BJ (cell line): ENCODE measurements at regions of chr6 and their contacts with region 1.

Region 1: DNA sequence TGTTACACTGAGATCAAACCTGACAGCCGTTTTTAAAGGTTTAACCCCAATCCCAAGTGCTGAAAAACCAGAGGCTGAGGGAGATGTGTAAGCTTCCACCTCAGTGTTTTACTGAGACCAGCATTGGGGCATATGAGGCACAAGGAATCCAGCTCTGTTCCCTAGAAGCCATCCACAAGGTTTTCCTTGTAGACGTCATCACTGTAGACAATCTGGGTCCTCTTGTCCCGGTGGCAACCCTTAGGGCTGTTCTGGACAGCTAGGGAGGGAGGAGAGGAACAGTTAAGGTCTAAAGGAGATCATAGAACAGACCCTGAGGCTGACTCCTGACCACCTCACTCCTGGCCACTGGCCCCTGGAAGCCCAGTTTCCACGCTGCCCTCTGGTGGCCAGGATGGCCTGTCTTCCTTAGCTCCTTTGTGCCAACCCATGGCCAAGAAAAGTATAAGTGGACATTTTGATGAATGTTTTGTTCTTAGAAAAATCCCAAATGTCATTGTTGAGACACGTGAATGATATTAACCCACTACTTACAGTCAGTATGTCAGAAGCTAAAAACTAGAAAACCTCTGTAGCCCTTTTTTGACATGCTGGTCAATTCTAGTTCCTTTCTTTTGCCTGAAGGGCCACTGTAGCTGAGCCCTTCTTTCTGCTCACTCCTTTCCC is 6.4 kb downstream of the CFB start:
- DNase-seq: no peak
- H3K4me3 ChIP-seq: no peak overlapping the region
- H3K27me3 ChIP-seq: no peaks in the 10 kb centered on the region
- CTCF ChIP-seq: peak; percentile 92

Region 2: GRCh38 chr6:31680840-31681671 is 271.2 kb before region 1 on chr6 and contains the start of gene LY6G5C:
- CTCF ChIA-PET with region 1: interaction called, 15 read pairs
- POLR2A ChIA-PET with region 1: no interaction called
- DNase-seq: peak; percentile 67
- H3K4me3 ChIP-seq: peak within 1 kb of the TSS; percentile 39
- H3K27me3 ChIP-seq: no peaks in the 10 kb centered on the region
- CTCF ChIP-seq: peak; percentile 75
- polyA plus RNA-seq, gene LY6G5C: 3.1 and 3.6 TPM in 2 replicates

Region 3: DNA sequence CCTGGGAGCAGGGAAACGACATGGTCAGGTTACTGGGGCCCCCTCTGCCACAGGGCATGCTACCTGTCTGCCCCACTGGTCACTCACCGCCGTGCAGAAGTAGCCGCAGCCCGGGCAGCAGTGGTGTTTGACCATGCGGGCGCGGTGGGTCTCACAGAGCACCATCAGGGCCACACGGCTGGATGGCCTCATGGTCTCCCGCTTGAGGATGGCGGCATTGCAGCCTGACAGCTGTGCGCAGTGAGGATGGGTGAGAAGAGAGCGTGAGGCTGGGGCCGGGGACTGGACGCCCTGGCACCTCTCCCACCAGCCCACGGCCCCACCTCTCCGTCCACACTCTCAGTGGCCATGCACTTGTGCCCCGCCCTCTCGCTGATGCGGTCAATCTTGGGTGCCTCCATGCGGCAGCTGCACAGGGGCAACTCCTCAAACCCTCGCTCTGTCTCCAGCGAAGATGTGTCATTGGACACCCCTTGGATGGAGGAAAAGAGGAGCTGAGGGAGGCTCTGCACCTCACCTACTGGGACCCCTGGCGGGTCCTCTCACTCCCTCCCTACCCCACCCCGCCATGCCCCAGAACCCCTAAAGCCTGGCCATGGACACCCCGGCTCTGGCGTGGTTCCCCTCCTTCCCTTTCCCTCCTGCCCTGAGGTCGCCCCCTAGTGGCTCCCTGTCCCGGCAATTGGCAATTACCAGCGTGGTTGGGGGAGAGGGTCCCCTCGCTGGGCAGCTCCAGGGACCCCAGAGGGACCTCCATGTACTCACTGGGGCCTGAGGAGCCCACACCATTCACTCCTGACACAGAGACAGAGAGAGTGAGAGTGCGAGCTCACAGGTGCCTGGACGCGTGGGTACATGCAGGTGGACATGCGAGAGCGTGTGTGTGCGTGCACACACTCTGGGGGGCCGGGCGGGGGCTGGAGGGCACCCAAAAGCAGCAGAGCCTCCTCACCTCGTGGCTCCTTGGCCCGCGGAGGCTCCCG is 63.7 kb before region 1 on chr6:
- CTCF ChIA-PET with region 1: interaction called, 10 read pairs
- POLR2A ChIA-PET with region 1: no interaction called
- DNase-seq: no peak
- H3K4me3 ChIP-seq: no peak overlapping the region
- H3K27me3 ChIP-seq: no peaks in the 10 kb centered on the region
- CTCF ChIP-seq: peak; percentile 82

Region 4: GRCh38 chr6:31901953-31902643 is 50.2 kb before region 1 on chr6 and contains the start of gene ZBTB12:
- CTCF ChIA-PET with region 1: interaction called, 26 read pairs
- POLR2A ChIA-PET with region 1: interaction called, 4 read pairs
- DNase-seq: peak; percentile 74
- H3K4me3 ChIP-seq: peak within 1 kb of the TSS; percentile 61
- H3K27me3 ChIP-seq: no peaks in the 10 kb centered on the region
- CTCF ChIP-seq: no peak
- polyA plus RNA-seq, gene ZBTB12: 2.0 and 2.6 TPM in 2 replicates

Region 5: DNA sequence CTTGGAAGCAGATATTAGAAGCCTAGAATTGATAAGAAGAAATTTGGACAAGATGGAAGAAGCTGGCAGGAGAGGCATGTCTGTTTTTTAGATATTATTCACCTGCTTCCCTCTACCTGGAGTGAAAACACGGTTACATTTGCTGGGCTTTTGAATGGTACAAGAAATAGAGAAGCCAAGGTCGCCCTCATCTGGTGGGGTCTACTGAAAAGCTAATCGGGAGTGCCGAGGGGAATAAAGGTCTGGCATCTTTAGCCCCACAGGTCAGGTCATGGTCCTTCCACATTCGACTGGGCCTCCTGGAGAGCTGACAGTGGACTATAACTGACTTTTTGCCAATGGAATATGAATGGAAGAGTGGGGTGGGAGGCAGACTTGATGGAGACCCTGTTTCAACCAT is 29.3 kb before region 1 on chr6:
- CTCF ChIA-PET with region 1: interaction called, 20 read pairs
- POLR2A ChIA-PET with region 1: no interaction called
- DNase-seq: no peak
- H3K4me3 ChIP-seq: no peak overlapping the region
- H3K27me3 ChIP-seq: no peaks in the 10 kb centered on the region; the same call in 1 of the 2 replicates
- CTCF ChIP-seq: no peak

Region 6: DNA sequence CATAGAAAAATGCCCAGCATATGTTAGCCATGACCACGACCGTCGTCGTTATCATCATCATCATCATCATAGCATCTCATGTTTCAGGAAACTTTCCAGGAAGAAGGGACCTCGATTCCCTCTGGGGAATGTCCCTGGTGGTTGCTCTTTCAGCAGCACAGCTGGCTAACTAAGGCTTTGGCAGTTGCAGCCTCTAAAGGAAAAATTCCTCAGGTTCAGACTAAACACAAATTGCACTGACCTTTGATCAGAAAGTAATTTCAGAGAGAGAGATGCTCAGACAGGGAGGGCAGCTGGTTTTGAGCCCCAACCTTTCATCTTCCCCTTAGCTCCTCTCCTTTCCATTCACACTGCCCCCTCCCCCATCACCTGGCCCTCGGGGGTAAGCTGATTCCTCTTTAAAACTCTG is 12.0 kb before region 1 on chr6:
- CTCF ChIA-PET with region 1: interaction called, 35 read pairs
- POLR2A ChIA-PET with region 1: no interaction called
- DNase-seq: no peak
- H3K4me3 ChIP-seq: no peak overlapping the region
- H3K27me3 ChIP-seq: peaks cover 1% of the 10 kb centered on the region
- CTCF ChIP-seq: peak; percentile 16; the same call in 1 of the 2 replicates

Region 7: DNA sequence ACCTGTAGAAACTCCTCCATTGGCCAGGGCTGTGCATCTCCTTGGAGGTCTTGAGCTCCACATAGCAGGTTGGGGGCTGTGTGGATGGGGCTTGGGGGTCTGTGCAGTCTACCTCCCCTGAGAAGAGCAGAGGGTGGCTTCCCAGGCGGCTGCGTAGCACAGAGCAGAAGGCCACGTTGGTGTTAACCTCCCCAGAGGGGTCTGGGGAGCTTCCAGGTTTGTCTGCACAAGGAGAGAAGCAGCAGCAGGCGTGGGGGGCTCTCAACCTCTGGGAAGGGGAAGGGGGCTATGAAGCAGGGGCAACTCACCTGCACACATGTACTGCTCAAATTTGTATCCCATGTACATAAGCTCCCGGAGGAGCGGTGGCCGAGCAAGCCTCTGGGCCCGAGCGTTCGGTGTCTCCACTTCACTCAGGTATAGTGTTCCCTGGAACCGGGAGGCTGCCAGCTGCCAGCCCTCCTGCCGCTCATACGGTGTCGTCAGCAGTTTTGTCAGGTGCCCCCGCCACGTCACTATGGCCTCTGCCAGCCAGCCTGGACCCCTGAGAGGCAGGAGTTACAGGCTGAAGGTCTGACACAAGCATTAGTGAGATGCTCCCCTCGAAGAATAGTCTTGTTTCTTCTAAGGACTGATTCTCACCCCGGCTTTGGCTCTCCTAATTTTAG is 18.5 kb after region 1 on chr6:
- CTCF ChIA-PET with region 1: interaction called, 17 read pairs
- POLR2A ChIA-PET with region 1: no interaction called
- DNase-seq: no peak
- H3K4me3 ChIP-seq: peak overlapping the region; percentile 84
- H3K27me3 ChIP-seq: no peaks in the 10 kb centered on the region
- CTCF ChIP-seq: no peak